ENCODE measurements at regions of chr3 and their contacts with region 1.

Region 1: DNA sequence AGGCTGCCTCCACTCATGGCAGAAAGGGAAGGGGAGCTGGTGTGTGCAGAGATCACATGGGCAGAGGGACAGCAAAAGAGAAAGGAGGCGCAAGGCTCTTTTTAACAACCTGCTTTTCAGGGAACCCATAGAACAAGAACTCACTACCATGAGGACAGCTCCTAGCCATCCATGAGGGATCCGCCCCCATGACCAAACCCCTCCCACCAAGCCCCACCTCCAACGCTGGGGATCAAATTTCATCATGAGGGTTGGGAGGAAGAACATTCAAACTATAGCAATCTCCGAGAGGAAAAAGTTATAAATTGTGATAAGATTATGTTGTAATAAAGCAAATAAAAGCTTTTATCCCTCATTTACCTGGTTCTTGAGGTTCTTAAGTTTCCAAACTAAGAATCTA is 84.7 kb upstream of the LMCD1 start:
- DNase-seq: peak in 1 of 35 experiments; percentile 6
- ATAC-seq: no peak
- H3K4me3 ChIP-seq: no peak overlapping the region
- H3K4me3 Mint-ChIP-seq: no peak overlapping the region
- H3K27ac ChIP-seq: no peak overlapping the region
- H3K27ac Mint-ChIP-seq: peak overlapping the region in 1 of 2 donors; percentile 7
- H3K4me1 ChIP-seq: no peaks in the 10 kb centered on the region
- H3K4me1 Mint-ChIP-seq: peaks cover 6 to 10% (median 9%) of the 10 kb centered on the region in 3 donors
- H3K27me3 ChIP-seq: no peaks in the 10 kb centered on the region
- H3K27me3 Mint-ChIP-seq: no peaks in the 10 kb centered on the region

Region 2: DNA sequence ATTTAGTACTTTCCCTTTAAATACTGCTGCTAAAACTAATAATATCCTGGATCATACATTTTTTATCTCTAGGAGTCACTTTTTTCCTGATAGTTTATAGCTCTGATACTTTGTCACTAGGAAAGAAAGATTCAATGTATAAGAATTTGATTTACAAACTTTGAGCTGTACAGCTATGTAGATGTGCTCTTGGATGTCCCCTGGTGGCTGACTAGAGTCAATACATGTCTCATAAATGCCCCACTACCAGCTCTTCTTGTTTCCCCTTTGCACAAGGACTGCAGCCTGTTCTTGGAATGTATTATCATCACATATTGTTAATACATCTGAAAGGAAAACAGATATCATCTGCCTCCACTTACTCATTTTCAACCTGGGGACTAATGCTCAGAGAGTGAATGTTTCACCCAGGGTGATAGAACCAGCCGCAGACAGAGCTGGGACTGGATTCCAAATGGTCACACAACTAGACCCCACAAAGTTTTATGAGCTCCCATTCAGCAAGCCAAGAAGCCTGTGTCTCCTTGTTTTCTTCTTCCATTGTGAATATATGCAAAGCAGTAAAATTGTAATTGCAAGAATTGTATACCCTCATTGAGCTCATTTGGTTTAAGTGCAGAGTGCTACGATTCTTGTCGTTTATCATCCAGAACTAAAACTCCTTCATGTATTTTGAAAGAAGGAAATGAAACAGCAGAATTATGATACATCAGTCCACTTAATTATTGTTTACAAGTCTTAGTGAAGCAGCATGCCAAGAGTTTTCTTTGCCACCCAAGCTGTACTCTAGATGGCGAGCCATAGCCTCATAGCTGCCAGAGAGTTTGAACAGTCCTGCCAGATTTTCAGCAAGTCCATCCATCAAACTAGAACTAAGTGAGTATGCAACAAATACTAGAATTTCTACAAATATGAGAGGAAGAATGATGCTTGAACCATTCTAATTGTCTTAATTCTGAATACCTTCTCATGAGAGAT is 177.0 kb before region 1 on chr3:
- CTCF ChIA-PET with region 1: interaction called, 6 to 15 read pairs
- POLR2A ChIA-PET with region 1: interaction called in 1 of 2 experiments, 3 read pairs
- DNase-seq: peak in 17 of 35 experiments; percentile 1 to 53 (median 11)
- ATAC-seq: no peak
- H3K4me3 ChIP-seq: no peak overlapping the region
- H3K4me3 Mint-ChIP-seq: no peak overlapping the region
- H3K27ac ChIP-seq: no peak overlapping the region
- H3K27ac Mint-ChIP-seq: no peak overlapping the region
- H3K4me1 ChIP-seq: no peaks in the 10 kb centered on the region
- H3K4me1 Mint-ChIP-seq: no peaks in the 10 kb centered on the region
- H3K27me3 ChIP-seq: no peaks in the 10 kb centered on the region
- H3K27me3 Mint-ChIP-seq: peaks cover 0 to under 1% of the 10 kb centered on the region in 2 donors

Region 3: GRCh38 chr3:8301728-8302462 is 115.1 kb before region 1 on chr3:
- CTCF ChIA-PET with region 1: interaction called, 4 to 19 read pairs
- POLR2A ChIA-PET with region 1: no interaction called
- DNase-seq: peak in 2 of 35 experiments; percentile 12 to 61
- ATAC-seq: peak in 2 of 4 experiments; percentile 35 to 51
- H3K4me3 ChIP-seq: no peak overlapping the region
- H3K4me3 Mint-ChIP-seq: no peak overlapping the region
- H3K27ac ChIP-seq: no peak overlapping the region
- H3K27ac Mint-ChIP-seq: peak overlapping the region in 1 of 2 donors; percentile 55
- H3K4me1 ChIP-seq: no peaks in the 10 kb centered on the region
- H3K4me1 Mint-ChIP-seq: peaks cover 7 to 15% (median 9%) of the 10 kb centered on the region in 3 donors
- H3K27me3 ChIP-seq: no peaks in the 10 kb centered on the region
- H3K27me3 Mint-ChIP-seq: peaks cover 0 to 6% of the 10 kb centered on the region in 2 donors

Region 4: GRCh38 chr3:8385848-8386620 is 30.9 kb before region 1 on chr3:
- CTCF ChIA-PET with region 1: no interaction called
- POLR2A ChIA-PET with region 1: no interaction called
- DNase-seq: no peak
- ATAC-seq: no peak
- H3K4me3 ChIP-seq: no peak overlapping the region
- H3K4me3 Mint-ChIP-seq: no peak overlapping the region
- H3K27ac ChIP-seq: no peak overlapping the region
- H3K27ac Mint-ChIP-seq: no peak overlapping the region
- H3K4me1 ChIP-seq: no peaks in the 10 kb centered on the region
- H3K4me1 Mint-ChIP-seq: peaks cover 0 to 7% (median 7%) of the 10 kb centered on the region in 3 donors
- H3K27me3 ChIP-seq: no peaks in the 10 kb centered on the region
- H3K27me3 Mint-ChIP-seq: no peaks in the 10 kb centered on the region